AG04450 (cell line): ENCODE measurements at regions of chr2 and their contacts with region 1.

Region 1: DNA sequence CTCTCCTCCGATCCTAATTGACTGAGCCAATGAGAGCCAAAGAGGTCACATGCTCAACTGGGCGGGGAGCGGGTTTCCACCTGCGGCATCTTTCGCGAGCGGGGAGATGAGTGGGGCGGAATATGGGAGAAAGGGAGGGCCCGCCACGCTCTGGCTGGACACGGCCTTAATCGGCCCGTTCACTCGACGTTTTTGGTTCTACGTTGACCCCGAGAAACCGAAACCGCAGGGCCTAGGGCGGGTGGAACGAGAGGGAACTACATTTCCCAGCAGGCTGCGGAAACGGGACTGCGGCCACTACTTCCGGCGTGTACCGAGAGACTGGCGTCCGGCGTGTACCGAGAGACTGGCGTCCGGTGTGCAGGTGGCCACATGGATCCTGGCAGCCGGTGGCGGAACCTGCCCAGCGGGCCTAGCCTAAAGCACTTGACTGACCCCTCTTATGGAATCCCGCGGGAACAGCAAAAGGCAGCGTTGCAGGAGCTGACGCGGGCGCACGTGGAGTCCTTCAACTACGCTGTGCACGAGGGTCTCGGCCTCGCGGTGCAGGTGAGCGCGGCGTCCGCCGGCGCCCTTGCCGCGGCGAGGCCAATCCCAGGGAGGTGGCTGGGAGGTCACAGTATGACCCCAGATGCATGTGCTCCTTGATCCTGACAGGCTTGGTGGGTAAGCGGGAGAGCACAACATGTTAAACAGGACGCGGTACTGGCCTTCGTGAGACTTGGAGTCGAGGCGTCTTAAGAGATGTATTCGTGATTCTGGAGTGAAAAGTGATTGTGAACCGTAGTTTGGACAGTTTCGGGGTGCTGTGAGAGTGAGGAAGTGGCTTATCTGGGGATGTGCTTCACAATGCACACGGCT is at the start of gene POLR1B:
- DNase-seq: peak; percentile 24
- H3K4me3 ChIP-seq: peak within 1 kb of the TSS; percentile 96
- H3K27ac ChIP-seq: peak within 1 kb of the TSS; percentile 90
- H3K27me3 ChIP-seq: no peaks in the 10 kb centered on the region
- CTCF ChIP-seq: no peak
- polyA plus RNA-seq, gene POLR1B: 11.3 and 12.4 TPM in 2 replicates

Region 2: DNA sequence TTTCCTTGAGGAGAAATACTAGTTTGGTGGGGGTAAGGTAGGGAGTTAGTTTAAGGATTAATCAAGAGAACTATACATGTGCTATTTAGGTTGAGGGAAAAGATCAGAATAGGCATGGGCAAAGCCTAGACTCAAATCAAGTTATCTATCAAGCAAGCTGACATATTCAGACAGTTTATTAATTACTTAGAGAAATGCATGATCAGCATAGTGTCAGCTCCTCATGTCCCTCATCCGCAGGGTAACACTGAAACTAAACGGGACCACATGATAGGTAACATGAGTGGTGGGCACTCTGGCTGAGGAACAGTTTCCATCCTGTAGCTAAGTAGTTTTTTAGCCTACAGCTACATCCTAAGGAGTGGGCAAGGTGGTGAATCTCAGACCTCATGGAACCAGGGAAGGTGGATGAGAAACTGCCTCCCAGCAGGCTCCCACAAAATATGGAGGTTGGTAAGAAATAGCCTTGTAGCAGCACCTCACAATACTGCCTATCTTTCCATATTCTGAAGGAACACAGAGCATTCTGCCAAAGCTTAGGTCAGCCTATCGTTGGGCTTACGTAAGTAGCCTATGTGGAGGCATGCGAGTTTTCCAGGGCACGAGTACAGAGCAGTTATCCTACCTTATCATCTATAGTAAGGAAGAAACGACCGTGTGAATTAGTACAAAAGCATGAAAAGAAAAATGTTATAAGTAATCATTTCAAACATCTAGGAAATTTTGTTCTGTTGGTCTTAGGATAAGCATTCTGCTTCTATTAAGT is 248.5 kb before region 1 on chr2:
- CTCF ChIA-PET with region 1: no interaction called
- POLR2A ChIA-PET with region 1: interaction called, 13 read pairs
- DNase-seq: no peak
- H3K4me3 ChIP-seq: no peak overlapping the region
- H3K27ac ChIP-seq: no peak overlapping the region
- H3K27me3 ChIP-seq: no peaks in the 10 kb centered on the region
- CTCF ChIP-seq: no peak

Region 3: GRCh38 chr2:112474844-112475486 is 67.4 kb before region 1 on chr2:
- CTCF ChIA-PET with region 1: no interaction called
- POLR2A ChIA-PET with region 1: no interaction called
- DNase-seq: no peak
- H3K4me3 ChIP-seq: no peak overlapping the region
- H3K27ac ChIP-seq: no peak overlapping the region
- H3K27me3 ChIP-seq: no peaks in the 10 kb centered on the region
- CTCF ChIP-seq: no peak

Region 4: GRCh38 chr2:112493858-112494648 is 48.3 kb before region 1 on chr2:
- CTCF ChIA-PET with region 1: no interaction called
- POLR2A ChIA-PET with region 1: no interaction called
- DNase-seq: no peak
- H3K4me3 ChIP-seq: no peak overlapping the region
- H3K27ac ChIP-seq: no peak overlapping the region
- H3K27me3 ChIP-seq: no peaks in the 10 kb centered on the region
- CTCF ChIP-seq: no peak

Region 5: DNA sequence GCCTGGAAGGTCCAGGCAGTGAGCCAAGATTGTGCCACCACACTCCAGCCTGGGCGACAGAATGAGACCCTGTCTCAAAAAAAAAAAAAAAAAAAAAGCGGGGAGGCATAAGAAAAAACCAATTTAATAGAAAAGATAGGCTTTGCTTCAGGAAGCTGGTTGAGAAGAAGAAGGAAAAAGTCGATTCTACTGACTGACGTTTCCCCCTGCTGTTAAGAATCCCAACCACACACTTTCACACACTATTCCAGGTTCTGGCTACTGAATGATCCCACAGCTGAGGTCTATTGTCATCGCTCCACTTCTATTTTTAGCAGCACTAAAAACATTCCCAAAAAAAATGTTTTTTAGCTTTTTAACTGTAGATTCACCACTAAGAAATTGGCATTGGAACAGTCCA is 35.4 kb after region 1 on chr2:
- CTCF ChIA-PET with region 1: interaction called, 11 read pairs
- POLR2A ChIA-PET with region 1: no interaction called
- DNase-seq: no peak
- H3K4me3 ChIP-seq: no peak overlapping the region
- H3K27ac ChIP-seq: no peak overlapping the region
- H3K27me3 ChIP-seq: no peaks in the 10 kb centered on the region
- CTCF ChIP-seq: peak; percentile 39

Region 6: DNA sequence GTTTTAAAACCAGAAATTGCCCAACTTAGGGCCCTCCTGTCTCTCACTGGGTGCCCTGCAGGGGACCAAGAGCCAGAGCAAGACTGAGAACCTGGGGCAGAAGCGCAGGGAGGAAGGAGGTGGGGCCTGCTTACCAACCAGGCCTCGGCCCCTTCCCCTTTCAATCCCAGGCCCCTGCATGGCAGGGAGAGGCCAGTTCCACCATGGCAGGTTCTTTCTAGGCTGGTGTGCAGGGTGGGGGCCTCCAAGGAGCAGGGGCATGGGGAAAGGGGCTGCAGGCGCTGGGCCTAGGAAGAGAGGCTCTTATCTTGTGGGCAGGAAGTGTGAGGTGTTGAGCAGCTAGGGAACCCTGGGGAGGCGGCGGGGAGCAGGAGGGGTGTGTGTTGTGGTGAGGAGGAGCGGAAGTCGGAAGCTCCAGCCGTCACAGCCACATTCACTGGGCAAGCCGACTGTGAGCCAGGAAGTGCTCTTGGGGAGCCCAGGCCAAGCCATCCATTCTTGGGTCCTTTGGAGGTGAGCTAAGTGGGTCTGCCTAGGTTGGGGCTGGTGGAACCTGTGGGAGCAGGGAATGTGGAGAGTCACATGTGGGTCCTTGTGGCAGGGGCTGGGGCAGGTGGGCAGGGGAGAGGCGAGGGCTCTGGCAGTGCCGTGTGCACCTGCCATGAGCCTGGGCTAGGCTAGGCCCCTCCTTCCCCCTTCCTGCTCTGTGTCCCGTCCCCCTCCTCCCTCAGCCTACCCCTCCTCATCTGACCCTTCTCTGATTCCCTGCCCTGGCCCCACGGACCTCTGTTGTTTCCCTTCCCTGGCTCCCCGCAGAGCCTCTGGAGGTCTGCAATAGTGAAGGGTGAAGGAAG is 631.4 kb after region 1 on chr2 and contains the start of gene PSD4:
- CTCF ChIA-PET with region 1: no interaction called
- POLR2A ChIA-PET with region 1: no interaction called
- DNase-seq: no peak
- H3K4me3 ChIP-seq: no peak within 1 kb of the TSS
- H3K27ac ChIP-seq: no peak within 1 kb of the TSS
- H3K27me3 ChIP-seq: peaks cover 20% of the 10 kb centered on the region
- CTCF ChIP-seq: no peak
- polyA plus RNA-seq, gene PSD4: 0.32 and 0.37 TPM in 2 replicates